PC-9 (cell line): ENCODE measurements at regions of chr7 and their contacts with region 1.

Region 1: GRCh38 chr7:45923290-45923689 is 2.2 kb upstream of the IGFBP3 start:
- DNase-seq: peak; percentile 93 to 94
- H3K4me3 ChIP-seq: no peak overlapping the region
- H3K27ac ChIP-seq: peak overlapping the region; percentile 52
- H3K4me1 ChIP-seq: peaks cover 41% of the 10 kb centered on the region
- H3K27me3 ChIP-seq: no peaks in the 10 kb centered on the region
- CTCF ChIP-seq: peak; percentile 99

Region 2: DNA sequence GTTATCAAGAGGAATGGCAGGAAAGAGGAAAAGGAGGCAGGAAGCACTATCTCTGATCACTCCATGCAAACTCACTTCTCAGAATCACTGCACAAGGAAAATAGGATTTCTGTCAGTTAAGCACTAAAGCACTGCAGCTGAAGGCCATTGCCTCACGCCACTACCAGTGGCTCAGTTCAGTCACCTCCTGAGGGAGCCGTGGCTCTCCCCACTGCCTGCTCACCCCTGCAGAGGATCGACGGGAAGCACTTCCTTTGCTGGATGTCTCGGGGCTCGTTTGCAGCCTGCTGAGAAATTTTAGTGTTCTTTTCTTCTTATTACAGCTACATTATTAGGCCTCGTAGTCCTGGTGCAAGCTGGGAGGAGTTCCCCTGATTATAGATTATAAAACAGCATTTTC is 439.2 kb before region 1 on chr7:
- CTCF ChIA-PET with region 1: no interaction called
- POLR2A ChIA-PET with region 1: no interaction called
- intact Hi-C with region 1: no loop called
- DNase-seq: no peak
- H3K4me3 ChIP-seq: no peak overlapping the region
- H3K27ac ChIP-seq: no peak overlapping the region
- H3K4me1 ChIP-seq: no peaks in the 10 kb centered on the region
- H3K27me3 ChIP-seq: peaks cover 69% of the 10 kb centered on the region
- CTCF ChIP-seq: no peak

Region 3: GRCh38 chr7:45663167-45663921 is 259.9 kb before region 1 on chr7:
- CTCF ChIA-PET with region 1: no interaction called
- POLR2A ChIA-PET with region 1: no interaction called
- intact Hi-C with region 1: loop called (anchors 2 kb)
- DNase-seq: peak in 1 of 2 experiments; percentile 58
- H3K4me3 ChIP-seq: no peak overlapping the region
- H3K27ac ChIP-seq: no peak overlapping the region
- H3K4me1 ChIP-seq: no peaks in the 10 kb centered on the region
- H3K27me3 ChIP-seq: peaks cover 45% of the 10 kb centered on the region
- CTCF ChIP-seq: peak; percentile 98

Region 4: DNA sequence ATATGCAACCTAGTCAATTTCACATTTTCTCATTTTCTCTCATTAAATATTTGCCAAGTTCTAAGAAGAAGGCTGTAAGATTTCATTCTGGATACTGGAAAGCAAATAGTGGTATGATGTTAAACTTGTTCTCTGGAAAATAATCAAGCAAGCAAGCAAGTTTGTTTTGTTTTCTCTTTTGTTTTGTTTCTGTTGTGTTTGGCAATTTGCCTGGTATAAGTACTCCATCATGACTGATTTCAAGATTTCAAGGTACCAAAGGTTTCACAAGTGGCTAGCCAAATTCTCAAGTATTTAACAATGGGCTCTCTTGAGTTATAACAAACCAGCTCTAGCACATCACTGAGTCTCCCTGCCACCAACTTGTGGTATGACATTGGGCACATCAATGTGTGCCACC is 149.4 kb after region 1 on chr7:
- CTCF ChIA-PET with region 1: no interaction called
- POLR2A ChIA-PET with region 1: no interaction called
- intact Hi-C with region 1: loop called (anchors 1 kb)
- DNase-seq: peak; percentile 14 to 84
- H3K4me3 ChIP-seq: no peak overlapping the region
- H3K27ac ChIP-seq: peak overlapping the region; percentile 28
- H3K4me1 ChIP-seq: peaks cover 28% of the 10 kb centered on the region
- H3K27me3 ChIP-seq: no peaks in the 10 kb centered on the region
- CTCF ChIP-seq: no peak

Region 5: DNA sequence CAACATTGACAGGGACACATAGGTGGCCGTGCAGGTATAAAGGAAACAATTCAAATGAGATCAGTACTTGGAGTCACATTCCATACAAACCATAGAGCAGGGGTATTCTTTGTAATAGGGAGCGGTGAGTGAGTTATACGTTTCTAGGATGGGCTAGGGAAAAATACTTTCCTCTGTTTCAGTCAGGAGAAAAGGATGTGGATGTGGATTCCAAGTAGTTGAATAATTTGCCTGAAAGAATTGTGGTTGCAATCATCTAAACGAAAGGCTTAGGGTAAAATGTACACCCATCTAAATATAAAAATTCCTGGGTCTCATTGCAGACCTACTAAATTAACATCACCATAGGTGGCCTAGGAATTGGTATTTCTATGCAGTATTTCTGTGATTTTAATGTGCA is 268.5 kb after region 1 on chr7:
- CTCF ChIA-PET with region 1: interaction called, 6 read pairs
- POLR2A ChIA-PET with region 1: no interaction called
- intact Hi-C with region 1: loop called (anchors 1 kb)
- DNase-seq: peak; percentile 62 to 93
- H3K4me3 ChIP-seq: no peak overlapping the region
- H3K27ac ChIP-seq: peak overlapping the region; percentile 88
- H3K4me1 ChIP-seq: peaks cover 25% of the 10 kb centered on the region
- H3K27me3 ChIP-seq: no peaks in the 10 kb centered on the region
- CTCF ChIP-seq: no peak

Region 6: GRCh38 chr7:46282155-46282554 is 358.9 kb after region 1 on chr7:
- CTCF ChIA-PET with region 1: no interaction called
- POLR2A ChIA-PET with region 1: interaction called, 8 read pairs
- intact Hi-C with region 1: loop called (anchors 1 kb)
- DNase-seq: no peak
- H3K4me3 ChIP-seq: no peak overlapping the region
- H3K27ac ChIP-seq: peak overlapping the region; percentile 83
- H3K4me1 ChIP-seq: peaks cover 31% of the 10 kb centered on the region
- H3K27me3 ChIP-seq: no peaks in the 10 kb centered on the region
- CTCF ChIP-seq: no peak

Region 7: DNA sequence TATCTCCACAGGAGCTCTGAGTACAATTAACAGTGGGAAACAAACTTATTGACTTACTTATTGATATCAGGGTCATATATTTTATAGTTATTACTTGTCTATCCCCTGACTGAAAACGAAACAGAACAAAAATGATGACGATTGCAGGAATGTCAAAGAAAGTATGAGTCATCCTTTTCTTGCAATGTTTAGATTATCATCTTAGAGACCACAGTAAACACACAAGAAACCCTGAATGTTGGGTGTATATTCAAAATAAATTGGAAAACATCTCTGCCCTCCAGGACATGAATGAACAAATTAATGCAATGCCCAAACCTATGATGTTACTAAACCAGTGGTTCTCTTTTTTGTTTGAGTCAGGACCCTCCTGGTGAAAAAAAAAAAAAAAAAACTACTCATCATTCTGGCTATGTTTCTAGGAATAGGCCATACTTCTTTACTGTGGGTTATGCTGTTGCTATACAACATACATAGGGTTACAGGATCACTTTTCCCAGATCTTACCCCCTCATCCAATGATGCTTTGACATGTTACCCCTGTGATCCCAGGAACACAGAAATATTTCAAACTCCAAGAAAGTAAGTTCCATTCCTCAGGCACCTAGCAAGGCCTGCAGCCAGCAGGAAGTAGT is 621.2 kb after region 1 on chr7:
- CTCF ChIA-PET with region 1: no interaction called
- POLR2A ChIA-PET with region 1: no interaction called
- intact Hi-C with region 1: loop called (anchors 2 kb)
- DNase-seq: peak; percentile 34 to 84
- H3K4me3 ChIP-seq: no peak overlapping the region
- H3K27ac ChIP-seq: peak overlapping the region; percentile 67
- H3K4me1 ChIP-seq: peaks cover 30% of the 10 kb centered on the region
- H3K27me3 ChIP-seq: no peaks in the 10 kb centered on the region
- CTCF ChIP-seq: no peak

Region 8: DNA sequence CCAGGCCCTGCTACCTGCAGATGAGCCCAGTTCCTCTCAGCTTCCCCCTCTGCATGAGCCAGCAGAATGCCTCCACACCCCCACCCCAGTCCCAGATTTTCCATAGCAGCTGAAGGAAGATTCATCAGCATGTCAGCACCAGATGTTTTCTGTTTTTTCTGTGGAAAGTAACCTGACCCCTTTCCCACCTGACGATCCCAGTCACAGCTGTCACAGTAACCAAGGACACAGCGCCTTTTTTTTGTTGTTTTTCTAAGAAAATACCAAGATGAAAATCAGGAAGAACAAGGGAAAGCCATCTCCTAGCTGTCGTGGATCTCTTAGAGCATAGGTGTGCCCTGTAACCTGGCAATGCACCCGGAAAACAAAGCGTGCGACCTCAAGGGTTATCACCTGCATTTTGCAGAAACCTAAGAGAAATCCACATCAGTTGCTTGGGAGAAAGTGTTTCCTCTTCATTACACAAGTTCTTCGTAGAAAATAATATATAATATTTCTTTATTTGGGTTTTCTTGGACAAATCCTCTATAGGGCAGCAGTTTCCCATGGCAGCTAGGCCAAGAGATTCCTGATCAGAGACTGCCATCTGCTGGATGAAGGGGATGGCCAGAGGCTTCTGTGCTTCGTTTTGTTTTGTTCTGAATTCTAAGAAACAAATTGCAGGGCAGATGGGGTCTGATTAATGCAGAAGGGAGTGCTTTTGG is 1256.7 kb after region 1 on chr7:
- CTCF ChIA-PET with region 1: no interaction called
- POLR2A ChIA-PET with region 1: interaction called, 5 read pairs
- intact Hi-C with region 1: loop called (anchors 1 kb)
- DNase-seq: peak; percentile 44 to 75
- H3K4me3 ChIP-seq: no peak overlapping the region
- H3K27ac ChIP-seq: no peak overlapping the region
- H3K4me1 ChIP-seq: no peaks in the 10 kb centered on the region
- H3K27me3 ChIP-seq: peaks cover 8% of the 10 kb centered on the region; the same call in 1 of the 2 replicates
- CTCF ChIP-seq: peak; percentile 97